Activated CD4-positive, alpha-beta memory T cell treated with anti-CD3 and anti-CD28 coated beads for 36 hours (primary cell): ENCODE measurements at regions of chr3 and their contacts with region 1.

Region 1: GRCh38 chr3:29186982-29187725 is 93.7 kb upstream of the RBMS3 start:
- DNase-seq: no peak
- H3K4me3 Mint-ChIP-seq: no peak overlapping the region
- H3K27ac Mint-ChIP-seq: no peak overlapping the region
- H3K4me1 Mint-ChIP-seq: peaks cover 13% of the 10 kb centered on the region
- H3K27me3 Mint-ChIP-seq: no peaks in the 10 kb centered on the region

Region 2: GRCh38 chr3:28935146-28935545 is 252.0 kb before region 1 on chr3:
- CTCF ChIA-PET with region 1: no interaction called
- POLR2A ChIA-PET with region 1: no interaction called
- intact Hi-C with region 1: loop called (anchors 10 kb)
- DNase-seq: no peak
- H3K4me3 Mint-ChIP-seq: no peak overlapping the region
- H3K27ac Mint-ChIP-seq: no peak overlapping the region
- H3K4me1 Mint-ChIP-seq: peaks cover 11% of the 10 kb centered on the region
- H3K27me3 Mint-ChIP-seq: no peaks in the 10 kb centered on the region

Region 3: DNA sequence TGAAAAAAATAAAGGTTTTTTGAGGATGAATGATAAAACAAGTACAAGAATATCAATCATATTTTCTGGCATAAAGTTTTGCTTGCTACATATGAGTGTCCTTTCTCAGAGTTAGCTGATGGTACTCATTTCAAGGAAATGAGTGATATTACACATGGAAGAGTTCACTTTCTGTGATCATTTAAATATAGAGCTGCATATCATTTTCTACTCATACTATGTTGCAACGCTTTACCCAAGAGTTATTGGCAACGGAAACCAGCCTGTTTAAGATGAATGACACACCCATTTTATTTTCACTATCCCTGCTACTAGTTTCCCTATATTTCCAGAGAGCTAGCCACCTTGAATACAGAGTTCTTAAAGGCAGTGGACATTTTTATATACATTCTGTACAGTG is 58.3 kb after region 1 on chr3:
- CTCF ChIA-PET with region 1: no interaction called
- POLR2A ChIA-PET with region 1: no interaction called
- intact Hi-C with region 1: no loop called
- DNase-seq: no peak
- H3K4me3 Mint-ChIP-seq: no peak overlapping the region
- H3K27ac Mint-ChIP-seq: no peak overlapping the region
- H3K4me1 Mint-ChIP-seq: no peaks in the 10 kb centered on the region
- H3K27me3 Mint-ChIP-seq: no peaks in the 10 kb centered on the region

Region 4: DNA sequence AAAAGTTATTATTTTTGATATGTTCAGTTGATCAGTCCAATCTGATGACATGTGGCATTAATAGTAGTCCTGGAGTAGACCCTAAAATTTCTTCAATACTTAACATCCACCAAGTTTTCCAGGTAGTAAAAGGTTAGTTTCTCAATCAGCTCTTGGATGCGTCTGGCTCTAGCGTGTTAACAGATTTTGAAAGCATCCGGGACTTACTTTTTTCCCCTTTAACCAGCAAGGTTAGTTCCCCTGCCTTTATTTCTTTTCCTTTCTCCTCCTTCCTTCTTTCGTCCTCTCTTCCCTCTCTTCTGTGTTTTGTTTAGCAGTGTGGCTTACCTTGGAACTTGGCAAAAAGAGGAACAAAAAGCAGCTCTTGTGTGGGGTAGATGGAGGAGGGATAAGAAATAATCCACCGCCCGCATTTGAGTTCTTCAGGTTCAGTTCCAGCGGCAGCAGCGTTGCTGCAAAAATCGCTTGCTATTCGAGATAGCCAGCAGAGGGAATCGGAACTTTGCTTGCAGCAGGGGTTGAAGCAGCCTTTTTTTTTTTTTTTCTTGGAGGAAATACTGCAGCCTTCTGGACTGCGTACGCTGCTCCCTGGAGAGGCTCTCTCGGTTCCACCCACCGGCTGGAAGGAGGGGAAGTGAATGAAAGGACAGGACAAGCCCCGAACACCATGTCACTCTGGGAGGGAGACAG is 93.4 kb after region 1 on chr3 and contains the start of gene RBMS3:
- CTCF ChIA-PET with region 1: no interaction called
- POLR2A ChIA-PET with region 1: interaction called, 3 read pairs
- intact Hi-C with region 1: loop called (anchors 1 kb)
- DNase-seq: peak; percentile 17
- H3K4me3 Mint-ChIP-seq: peak within 1 kb of the TSS; percentile 64
- H3K27ac Mint-ChIP-seq: peak within 1 kb of the TSS; percentile 57
- H3K4me1 Mint-ChIP-seq: peaks cover 24% of the 10 kb centered on the region
- H3K27me3 Mint-ChIP-seq: peaks cover 13% of the 10 kb centered on the region
- total RNA-seq, gene RBMS3: 1.6 TPM